CD4-positive, alpha-beta memory T cell (primary cell): ENCODE measurements at regions of chr5 and their contacts with region 1.

Region 1: DNA sequence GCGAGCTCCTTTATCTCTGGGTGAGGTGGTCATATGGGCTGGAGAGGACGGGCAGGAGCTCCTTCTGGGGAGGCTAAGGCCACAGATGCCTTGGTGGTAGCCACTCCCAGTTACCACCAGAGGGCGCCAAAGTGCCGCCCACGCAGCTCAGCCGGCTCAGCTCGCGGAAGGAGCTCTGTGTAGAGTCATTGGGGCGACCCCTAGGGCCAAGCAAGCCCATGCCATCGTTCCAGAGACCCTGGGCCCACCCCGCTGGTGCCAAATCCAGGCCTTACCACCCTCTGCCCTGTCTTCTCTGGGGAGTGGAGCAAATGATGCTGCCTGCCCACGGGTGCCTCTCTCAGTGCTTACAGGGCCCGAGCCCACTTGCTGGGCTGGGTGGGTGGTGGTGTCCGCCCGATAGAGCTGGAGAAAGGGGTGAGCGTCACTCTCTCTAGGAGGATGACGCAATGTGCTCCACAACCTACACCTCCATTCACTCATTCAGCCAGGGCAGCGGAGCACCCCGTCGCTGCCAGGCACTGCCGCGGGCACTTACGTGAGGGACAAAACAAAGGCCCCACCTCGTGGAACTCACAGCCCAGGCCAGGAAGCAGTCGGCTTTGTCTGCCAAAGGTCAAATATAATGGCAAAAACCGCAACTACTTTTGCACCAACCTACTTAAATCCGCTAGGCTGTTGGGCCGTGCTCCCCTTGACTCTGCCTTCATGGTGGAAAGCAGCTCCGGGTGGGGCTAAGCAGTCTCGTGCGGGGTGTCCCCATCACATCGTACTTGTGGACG is 13.8 kb downstream of the TSPAN17 start:
- DNase-seq: peak in 4 of 5 donors; percentile 76 to 78 (median 77)
- H3K4me3 ChIP-seq: no peak overlapping the region
- H3K4me3 Mint-ChIP-seq: peak overlapping the region in 4 of 8 donors; percentile 13 to 78 (median 23)
- H3K27ac ChIP-seq: no peak overlapping the region
- H3K27ac Mint-ChIP-seq: peak overlapping the region in 4 of 7 donors; percentile 37 to 90 (median 72)
- H3K4me1 ChIP-seq: peaks cover 33% of the 10 kb centered on the region
- H3K4me1 Mint-ChIP-seq: peaks cover 23 to 35% (median 31%) of the 10 kb centered on the region in 4 donors
- H3K27me3 ChIP-seq: no peaks in the 10 kb centered on the region
- H3K27me3 Mint-ChIP-seq: peaks cover 5 to 13% of the 10 kb centered on the region in 2 donors

Region 2: DNA sequence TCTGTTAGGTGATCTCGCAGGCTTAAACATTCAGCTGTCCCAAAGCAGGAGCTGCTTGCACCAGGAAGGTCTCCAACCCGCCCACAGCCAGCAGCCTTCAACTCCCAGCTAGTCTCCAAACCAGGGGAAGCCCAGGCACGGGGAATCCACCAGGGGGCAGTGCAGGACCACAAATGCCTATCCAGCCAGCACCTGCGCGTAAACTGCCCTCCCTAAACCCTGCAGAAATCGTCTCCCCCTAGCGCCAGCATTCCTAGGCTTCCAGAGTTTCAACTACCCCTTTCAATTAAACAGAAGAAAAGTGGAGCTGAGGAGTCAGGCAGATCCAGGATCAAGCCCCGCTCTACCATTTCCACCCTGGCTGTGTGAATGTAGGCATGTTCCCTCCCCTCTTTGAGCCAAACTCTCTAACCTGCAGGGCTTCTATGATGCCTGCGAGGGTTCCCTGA is 931.2 kb before region 1 on chr5:
- CTCF ChIA-PET with region 1: interaction called, 15 read pairs
- POLR2A ChIA-PET with region 1: no interaction called
- intact Hi-C with region 1: no loop called
- DNase-seq: peak; percentile 82 to 89 (median 87)
- H3K4me3 ChIP-seq: no peak overlapping the region
- H3K4me3 Mint-ChIP-seq: peak overlapping the region in 1 of 8 donors; percentile 54
- H3K27ac ChIP-seq: no peak overlapping the region
- H3K27ac Mint-ChIP-seq: peak overlapping the region in 3 of 7 donors; percentile 14 to 46 (median 44)
- H3K4me1 ChIP-seq: peaks cover 5% of the 10 kb centered on the region
- H3K4me1 Mint-ChIP-seq: peaks cover 4 to 7% (median 7%) of the 10 kb centered on the region in 4 donors
- H3K27me3 ChIP-seq: peaks cover 4% of the 10 kb centered on the region
- H3K27me3 Mint-ChIP-seq: peaks cover 14 to 18% of the 10 kb centered on the region in 2 donors

Region 3: GRCh38 chr5:176427971-176428370 is 233.1 kb before region 1 on chr5:
- CTCF ChIA-PET with region 1: no interaction called
- POLR2A ChIA-PET with region 1: no interaction called
- intact Hi-C with region 1: no loop called
- DNase-seq: no peak
- H3K4me3 ChIP-seq: no peak overlapping the region
- H3K4me3 Mint-ChIP-seq: no peak overlapping the region
- H3K27ac ChIP-seq: no peak overlapping the region
- H3K27ac Mint-ChIP-seq: peak overlapping the region in 1 of 7 donors; percentile 59
- H3K4me1 ChIP-seq: no peaks in the 10 kb centered on the region
- H3K4me1 Mint-ChIP-seq: peaks cover 0 to 5% (median under 1%) of the 10 kb centered on the region in 4 donors
- H3K27me3 ChIP-seq: no peaks in the 10 kb centered on the region
- H3K27me3 Mint-ChIP-seq: peaks cover 4 to 6% of the 10 kb centered on the region in 2 donors

Region 4: GRCh38 chr5:176639981-176640380 is 21.1 kb before region 1 on chr5:
- CTCF ChIA-PET with region 1: interaction called, 22 read pairs
- POLR2A ChIA-PET with region 1: interaction called, 55 read pairs
- intact Hi-C with region 1: no loop called
- DNase-seq: no peak
- H3K4me3 ChIP-seq: no peak overlapping the region
- H3K4me3 Mint-ChIP-seq: no peak overlapping the region
- H3K27ac ChIP-seq: no peak overlapping the region
- H3K27ac Mint-ChIP-seq: no peak overlapping the region
- H3K4me1 ChIP-seq: no peaks in the 10 kb centered on the region
- H3K4me1 Mint-ChIP-seq: no peaks in the 10 kb centered on the region
- H3K27me3 ChIP-seq: no peaks in the 10 kb centered on the region
- H3K27me3 Mint-ChIP-seq: peaks cover 11 to 14% of the 10 kb centered on the region in 2 donors

Region 5: DNA sequence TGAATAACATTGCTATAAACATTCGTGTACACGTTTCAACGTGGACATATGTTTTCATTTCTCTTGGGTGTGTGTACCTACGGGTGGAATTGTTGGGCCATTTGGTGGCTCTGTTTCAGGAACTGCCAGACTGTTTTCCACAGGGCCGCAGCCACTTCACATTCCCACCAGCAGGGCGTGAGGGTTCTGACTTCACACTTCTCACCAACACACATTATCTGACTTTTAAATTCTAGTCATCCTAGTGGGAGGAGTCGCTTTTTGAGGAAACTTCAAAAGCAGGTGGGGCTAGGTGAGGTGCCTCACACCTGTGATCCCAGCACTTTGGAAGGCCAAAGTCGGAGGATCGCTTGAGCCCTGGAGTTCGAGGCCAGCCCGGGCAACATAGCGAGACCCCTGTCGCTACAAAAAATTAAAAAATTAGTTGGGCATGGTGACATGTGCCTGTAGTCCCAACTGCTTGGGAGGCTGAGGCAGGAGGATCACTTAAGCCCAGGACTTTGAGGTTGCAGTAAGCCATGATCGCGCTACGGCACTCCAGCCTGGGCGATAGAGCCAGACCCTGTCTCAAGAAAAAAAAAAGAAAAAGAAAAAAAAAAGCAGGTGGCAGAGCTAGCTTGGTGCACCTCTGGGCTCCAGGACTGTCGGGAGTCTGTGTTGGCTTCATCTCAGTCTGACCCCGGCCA is 14.8 kb after region 1 on chr5:
- CTCF ChIA-PET with region 1: interaction called, 18 read pairs
- POLR2A ChIA-PET with region 1: no interaction called
- intact Hi-C with region 1: no loop called
- DNase-seq: no peak
- H3K4me3 ChIP-seq: no peak overlapping the region
- H3K4me3 Mint-ChIP-seq: no peak overlapping the region
- H3K27ac ChIP-seq: no peak overlapping the region
- H3K27ac Mint-ChIP-seq: no peak overlapping the region
- H3K4me1 ChIP-seq: no peaks in the 10 kb centered on the region
- H3K4me1 Mint-ChIP-seq: no peaks in the 10 kb centered on the region
- H3K27me3 ChIP-seq: peaks cover 9% of the 10 kb centered on the region
- H3K27me3 Mint-ChIP-seq: peaks cover 24 to 45% of the 10 kb centered on the region in 2 donors

Region 6: DNA sequence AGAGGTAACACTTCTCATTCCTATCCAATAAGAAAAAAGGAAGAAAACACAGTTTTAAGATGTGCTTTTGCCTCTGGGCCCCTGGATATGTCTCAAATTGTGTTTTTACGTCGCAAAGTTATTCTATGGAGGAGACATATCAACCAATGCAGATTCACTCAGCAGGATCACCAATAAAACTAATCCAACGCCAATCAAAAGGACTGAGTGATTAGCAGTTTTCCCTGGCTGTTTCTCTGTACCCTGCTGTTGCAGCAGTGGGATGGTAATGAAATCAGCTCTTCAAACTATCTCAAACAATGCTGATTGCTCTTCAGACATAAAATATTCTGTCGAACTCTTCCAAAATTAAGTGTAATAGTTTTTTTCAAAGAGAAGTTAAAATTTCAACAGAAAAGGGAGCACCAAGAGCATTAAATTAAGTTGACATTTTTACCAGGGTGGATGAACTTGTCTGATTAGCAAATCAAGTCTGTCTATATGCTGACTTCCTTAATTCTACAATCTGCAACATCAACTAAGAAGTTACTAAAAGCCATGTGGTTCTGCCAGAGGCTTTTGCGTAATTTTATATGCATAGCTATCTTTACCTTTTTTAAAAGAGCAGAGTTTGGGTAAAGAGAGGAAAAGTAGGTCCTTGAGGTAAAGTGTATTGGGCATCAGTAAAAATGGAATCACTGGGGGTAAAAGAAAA is 247.8 kb after region 1 on chr5:
- CTCF ChIA-PET with region 1: interaction called, 11 read pairs
- POLR2A ChIA-PET with region 1: no interaction called
- intact Hi-C with region 1: no loop called
- DNase-seq: no peak
- H3K4me3 ChIP-seq: no peak overlapping the region
- H3K4me3 Mint-ChIP-seq: no peak overlapping the region
- H3K27ac ChIP-seq: no peak overlapping the region
- H3K27ac Mint-ChIP-seq: peak overlapping the region in 1 of 7 donors; percentile 5
- H3K4me1 ChIP-seq: no peaks in the 10 kb centered on the region
- H3K4me1 Mint-ChIP-seq: peaks cover 0 to 2% (median 1%) of the 10 kb centered on the region in 4 donors
- H3K27me3 ChIP-seq: no peaks in the 10 kb centered on the region
- H3K27me3 Mint-ChIP-seq: no peaks in the 10 kb centered on the region

Region 7: DNA sequence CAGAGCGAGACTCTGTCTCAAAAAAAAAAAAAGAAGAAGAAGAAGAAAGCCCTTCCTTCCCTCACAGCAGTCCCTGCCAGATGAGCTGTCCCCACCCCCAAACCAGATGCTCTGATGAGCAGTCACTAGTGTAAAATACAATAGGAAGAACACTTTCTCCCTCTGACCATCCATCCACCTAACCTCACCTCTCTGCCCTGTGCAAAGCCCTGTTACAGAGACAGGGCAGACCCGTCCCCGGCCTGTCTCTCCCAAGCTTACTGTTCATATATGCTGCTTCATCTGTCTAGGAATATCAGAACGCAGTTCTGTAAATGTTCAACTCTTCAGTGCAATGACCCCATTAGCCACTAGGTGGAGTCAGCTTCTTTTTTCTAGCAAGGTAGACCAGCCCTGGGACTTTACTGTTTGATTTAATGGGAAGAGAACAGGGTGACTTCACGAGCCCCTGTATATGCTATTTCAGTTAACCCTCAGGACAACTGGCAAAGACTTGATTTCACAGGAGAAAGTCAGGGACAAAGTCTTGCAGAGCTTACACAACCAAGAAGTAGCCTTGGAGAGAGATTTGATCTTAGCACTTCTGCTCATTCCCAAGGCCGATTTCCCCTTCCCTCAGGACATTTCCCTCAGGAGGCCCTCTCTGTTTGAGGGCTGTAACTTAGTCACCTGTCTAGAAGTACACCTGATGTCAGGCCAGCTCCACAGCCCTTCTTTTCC is 410.8 kb after region 1 on chr5:
- CTCF ChIA-PET with region 1: interaction called, 10 read pairs
- POLR2A ChIA-PET with region 1: no interaction called
- intact Hi-C with region 1: no loop called
- DNase-seq: peak; percentile 47 to 68 (median 58)
- H3K4me3 ChIP-seq: no peak overlapping the region
- H3K4me3 Mint-ChIP-seq: peak overlapping the region in 1 of 8 donors; percentile 27
- H3K27ac ChIP-seq: no peak overlapping the region
- H3K27ac Mint-ChIP-seq: peak overlapping the region in 4 of 7 donors; percentile 5 to 68 (median 30)
- H3K4me1 ChIP-seq: no peaks in the 10 kb centered on the region
- H3K4me1 Mint-ChIP-seq: peaks cover 4 to 5% (median 4%) of the 10 kb centered on the region in 4 donors
- H3K27me3 ChIP-seq: no peaks in the 10 kb centered on the region
- H3K27me3 Mint-ChIP-seq: no peaks in the 10 kb centered on the region